OCI-LY7 (cell line): ENCODE measurements at regions of chr13 and their contacts with region 1.

Region 1: DNA sequence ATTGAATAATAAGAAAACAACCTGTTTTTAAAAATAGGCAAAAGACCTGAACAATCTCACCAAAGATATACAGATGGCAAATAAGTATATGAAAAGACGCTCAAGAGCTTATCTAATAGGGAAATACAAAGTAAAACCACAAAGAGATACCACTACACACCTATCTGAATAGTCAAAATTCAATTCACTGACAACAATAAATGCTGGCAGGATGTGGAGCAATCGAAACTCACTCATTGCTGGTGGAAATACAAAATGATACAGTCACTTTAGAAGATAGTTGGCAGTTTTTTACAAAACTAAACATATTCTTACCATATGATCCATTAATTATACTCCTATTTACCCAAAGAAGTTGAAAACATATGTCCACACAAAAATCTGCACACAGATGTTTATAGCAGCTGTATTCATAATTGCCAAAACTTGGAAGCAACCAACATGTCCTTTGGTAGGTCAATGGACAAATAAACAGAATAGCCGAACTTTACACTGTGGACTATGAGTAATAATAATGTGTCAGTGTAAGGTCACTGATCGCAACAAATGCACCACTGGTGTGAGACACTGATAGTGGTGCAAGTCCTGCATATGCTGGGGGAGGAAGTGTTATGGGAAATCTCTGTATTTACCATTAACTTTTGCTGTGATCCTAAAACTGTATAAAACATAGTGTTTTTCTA is 20.8 kb downstream of the ZC3H13 start:
- DNase-seq: no peak
- H3K4me3 ChIP-seq: no peak overlapping the region
- H3K27ac ChIP-seq: no peak overlapping the region
- H3K4me1 ChIP-seq: no peaks in the 10 kb centered on the region
- CTCF ChIP-seq: no peak

Region 2: GRCh38 chr13:46010148-46010547 is 21.6 kb before region 1 on chr13:
- CTCF ChIA-PET with region 1: no interaction called
- POLR2A ChIA-PET with region 1: interaction called, 10 read pairs
- intact Hi-C with region 1: no loop called
- DNase-seq: no peak
- H3K4me3 ChIP-seq: no peak overlapping the region
- H3K27ac ChIP-seq: no peak overlapping the region
- H3K4me1 ChIP-seq: no peaks in the 10 kb centered on the region
- CTCF ChIP-seq: peak; percentile 65